CD8-positive, alpha-beta T cell (primary cell): ENCODE measurements at regions of chr16 and their contacts with region 1.

Region 1: DNA sequence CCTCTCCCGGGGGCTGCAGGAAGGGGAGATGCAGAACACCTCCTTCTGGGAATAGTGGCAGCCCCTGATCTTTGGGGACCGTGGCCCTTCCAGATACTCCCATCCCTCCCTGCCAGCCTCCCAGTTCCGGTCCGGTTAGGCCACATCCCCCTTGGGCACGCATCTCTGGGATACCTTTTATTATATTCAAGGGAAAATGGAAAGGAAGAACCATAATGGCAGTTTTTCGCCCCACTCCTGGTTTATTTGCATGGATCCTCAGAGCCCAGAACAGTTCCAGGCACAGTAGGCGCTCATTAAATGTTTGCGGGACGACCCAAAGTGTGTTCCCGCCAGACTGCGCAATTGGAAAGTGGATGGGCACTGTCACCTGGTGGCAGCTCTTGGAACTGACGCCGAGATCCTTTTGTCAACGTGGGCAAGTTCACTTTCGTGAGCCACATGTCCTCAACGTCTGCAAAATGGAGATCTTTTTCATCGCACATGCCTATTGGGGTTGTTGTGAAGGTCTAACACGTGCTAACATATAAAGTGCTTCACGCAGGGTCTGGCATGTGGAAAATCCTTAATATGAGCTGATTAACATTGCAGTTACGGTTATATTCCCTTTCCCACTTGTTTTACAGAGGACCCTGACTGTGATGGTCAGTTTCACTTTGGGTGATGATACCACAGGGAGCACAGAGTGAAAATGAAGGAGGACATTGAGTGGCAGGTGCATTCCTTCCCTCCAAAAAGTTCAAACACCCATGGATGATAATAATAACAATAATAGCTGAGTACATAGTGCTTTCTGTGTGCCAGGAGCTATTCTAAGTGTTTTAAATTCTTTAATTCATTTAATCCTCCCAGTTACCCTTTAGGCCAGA is 1.7 kb upstream of the GPRC5B start:
- DNase-seq: peak; percentile 64 to 85 (median 79)
- ATAC-seq: peak; percentile 65
- H3K4me3 ChIP-seq: peak overlapping the region in 1 of 2 experiments; percentile 72
- H3K4me3 Mint-ChIP-seq: peak overlapping the region; percentile 84
- H3K27ac ChIP-seq: no peak overlapping the region
- H3K27ac Mint-ChIP-seq: no peak overlapping the region
- H3K4me1 ChIP-seq: peaks cover 31% of the 10 kb centered on the region
- H3K4me1 Mint-ChIP-seq: peaks cover 24% of the 10 kb centered on the region
- H3K27me3 ChIP-seq: peaks cover 17 to 29% of the 10 kb centered on the region in 2 experiments
- H3K27me3 Mint-ChIP-seq: peaks cover 36% of the 10 kb centered on the region
- CTCF ChIP-seq: peak; percentile 97

Region 2: GRCh38 chr16:19086322-19087199 is 799.7 kb before region 1 on chr16:
- CTCF ChIA-PET with region 1: no interaction called
- POLR2A ChIA-PET with region 1: no interaction called
- intact Hi-C with region 1: loop called in 1 of 2 experiments (anchors 2 kb)
- DNase-seq: peak; percentile 53 to 87 (median 72)
- ATAC-seq: peak; percentile 91
- H3K4me3 ChIP-seq: peak overlapping the region; percentile 25 to 40
- H3K4me3 Mint-ChIP-seq: peak overlapping the region; percentile 63
- H3K27ac ChIP-seq: no peak overlapping the region
- H3K27ac Mint-ChIP-seq: no peak overlapping the region
- H3K4me1 ChIP-seq: peaks cover 3% of the 10 kb centered on the region
- H3K4me1 Mint-ChIP-seq: peaks cover 3% of the 10 kb centered on the region
- H3K27me3 ChIP-seq: peaks cover 0 to 4% of the 10 kb centered on the region in 2 experiments
- H3K27me3 Mint-ChIP-seq: peaks cover 2% of the 10 kb centered on the region
- CTCF ChIP-seq: peak; percentile 98

Region 3: DNA sequence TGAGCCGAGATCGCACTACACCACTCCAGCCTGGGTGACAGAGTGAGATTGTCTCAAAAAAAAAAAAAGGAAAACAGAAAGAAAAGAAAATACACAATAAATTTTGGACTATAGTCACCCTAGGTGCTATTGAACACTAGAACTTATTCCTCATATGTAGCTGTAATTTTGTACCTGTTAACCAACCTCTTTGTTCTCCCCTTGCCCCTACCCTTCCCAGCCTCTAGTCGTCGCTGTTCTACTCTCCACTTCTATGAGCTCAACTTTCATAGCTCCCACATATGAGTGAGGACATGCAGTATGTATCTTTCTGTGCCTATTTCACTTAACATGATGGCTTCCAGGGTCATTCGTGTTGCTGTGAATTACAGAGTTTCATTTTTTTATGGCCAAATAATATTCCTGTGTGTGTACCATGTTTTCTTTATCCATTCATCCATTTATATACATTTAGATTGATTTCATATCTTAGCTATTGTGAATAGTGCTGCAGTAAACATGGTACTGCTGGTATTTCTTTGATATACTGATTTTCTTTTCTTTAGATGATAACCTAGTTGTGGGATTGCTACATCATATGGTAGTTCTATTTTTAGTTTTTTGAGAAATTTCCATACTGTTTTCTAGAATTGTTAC is 302.5 kb before region 1 on chr16:
- CTCF ChIA-PET with region 1: interaction called, 18 read pairs
- POLR2A ChIA-PET with region 1: no interaction called
- intact Hi-C with region 1: loop called (anchors 1 kb)
- DNase-seq: peak in 4 of 9 experiments; percentile 8 to 61 (median 32)
- ATAC-seq: peak; percentile 75
- H3K4me3 ChIP-seq: no peak overlapping the region
- H3K4me3 Mint-ChIP-seq: no peak overlapping the region
- H3K27ac ChIP-seq: no peak overlapping the region
- H3K27ac Mint-ChIP-seq: no peak overlapping the region
- H3K4me1 ChIP-seq: no peaks in the 10 kb centered on the region
- H3K4me1 Mint-ChIP-seq: no peaks in the 10 kb centered on the region
- H3K27me3 ChIP-seq: no peaks in the 10 kb centered on the region
- H3K27me3 Mint-ChIP-seq: no peaks in the 10 kb centered on the region
- CTCF ChIP-seq: peak; percentile 63

Region 4: DNA sequence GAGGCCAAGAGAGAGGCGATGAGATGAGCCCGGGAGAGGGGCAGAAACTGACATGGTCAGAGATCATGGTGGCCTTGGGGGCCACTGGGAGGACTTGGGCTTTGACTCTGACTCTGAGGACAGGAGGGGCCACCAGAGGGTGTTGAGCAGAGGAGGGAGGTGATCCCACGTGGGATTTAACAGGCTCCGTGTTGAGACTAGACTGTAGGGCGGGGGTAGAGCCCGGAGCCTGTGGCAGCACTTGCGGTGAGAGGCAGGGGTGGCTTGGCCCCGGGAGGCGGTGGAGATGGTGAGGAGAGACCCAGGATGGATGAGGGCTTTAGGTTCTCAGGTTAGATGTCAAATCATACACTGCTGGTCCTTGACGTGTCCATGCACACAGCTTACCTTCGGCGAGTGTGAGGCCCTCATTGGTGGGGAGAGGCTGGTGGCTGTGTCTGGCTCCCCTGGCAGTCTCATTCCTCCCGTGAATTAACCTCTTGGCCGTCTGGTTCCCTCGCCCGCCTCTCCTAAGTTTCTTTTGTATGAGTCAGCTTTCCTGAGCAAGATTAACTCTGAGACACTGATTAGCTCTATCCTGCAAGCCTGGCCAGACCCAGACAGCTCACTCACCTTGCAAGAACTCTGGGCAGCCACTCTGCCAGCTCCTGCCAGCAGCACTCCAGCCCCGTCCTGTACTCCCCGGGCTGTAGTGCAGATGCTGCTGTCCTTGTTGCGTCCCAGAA is 291.1 kb before region 1 on chr16:
- CTCF ChIA-PET with region 1: interaction called, 105 read pairs
- POLR2A ChIA-PET with region 1: no interaction called
- intact Hi-C with region 1: no loop called
- DNase-seq: no peak
- ATAC-seq: no peak
- H3K4me3 ChIP-seq: no peak overlapping the region
- H3K4me3 Mint-ChIP-seq: no peak overlapping the region
- H3K27ac ChIP-seq: no peak overlapping the region
- H3K27ac Mint-ChIP-seq: no peak overlapping the region
- H3K4me1 ChIP-seq: no peaks in the 10 kb centered on the region
- H3K4me1 Mint-ChIP-seq: no peaks in the 10 kb centered on the region
- H3K27me3 ChIP-seq: no peaks in the 10 kb centered on the region
- H3K27me3 Mint-ChIP-seq: no peaks in the 10 kb centered on the region
- CTCF ChIP-seq: no peak

Region 5: DNA sequence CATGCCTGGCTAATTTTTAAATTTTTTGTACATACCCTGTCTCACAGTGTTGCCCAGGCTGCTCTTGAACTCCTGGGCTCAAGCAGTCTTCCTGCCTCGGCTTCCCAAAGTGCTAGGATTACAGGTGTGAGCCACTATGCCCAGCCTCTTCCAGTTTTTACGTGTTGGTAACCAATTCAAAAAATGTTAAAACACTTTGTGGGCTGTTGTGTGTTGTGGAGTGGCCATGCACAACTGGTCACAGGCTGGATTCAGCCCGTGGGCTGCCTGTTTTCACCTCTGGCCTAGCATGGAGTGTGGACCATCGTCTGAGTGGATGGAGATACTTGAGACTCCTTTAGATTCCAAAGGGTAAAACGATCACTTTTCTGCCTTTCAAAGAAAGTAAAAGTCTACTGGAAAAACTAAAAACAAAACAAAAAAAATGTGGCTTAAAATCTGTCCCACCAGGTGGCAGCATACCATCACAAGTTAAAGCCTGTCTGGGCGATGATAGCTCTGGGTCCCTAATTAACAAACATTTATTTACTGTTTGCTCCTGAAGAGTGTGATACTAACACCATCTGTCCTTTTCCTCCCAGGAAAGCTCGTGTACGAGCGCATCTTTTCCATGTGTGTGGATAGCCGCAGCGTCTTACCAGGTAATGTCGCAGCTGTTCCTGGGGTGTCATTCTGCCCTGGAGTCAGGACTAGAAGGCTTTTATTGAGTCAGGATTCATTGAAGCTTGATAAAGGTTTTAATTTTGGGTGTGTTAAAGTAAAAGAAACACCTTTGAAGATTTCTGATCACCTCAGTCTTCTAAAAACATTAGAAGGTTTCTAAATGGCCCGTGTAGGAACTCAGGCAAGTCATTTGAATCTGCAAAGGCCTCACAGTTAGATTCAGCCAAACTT is 285.0 kb before region 1 on chr16:
- CTCF ChIA-PET with region 1: interaction called, 105 read pairs
- POLR2A ChIA-PET with region 1: no interaction called
- intact Hi-C with region 1: loop called in 1 of 2 experiments (anchors 1 kb)
- DNase-seq: peak in 6 of 9 experiments; percentile 5 to 58 (median 30)
- ATAC-seq: no peak
- H3K4me3 ChIP-seq: no peak overlapping the region
- H3K4me3 Mint-ChIP-seq: no peak overlapping the region
- H3K27ac ChIP-seq: no peak overlapping the region
- H3K27ac Mint-ChIP-seq: no peak overlapping the region
- H3K4me1 ChIP-seq: no peaks in the 10 kb centered on the region
- H3K4me1 Mint-ChIP-seq: no peaks in the 10 kb centered on the region
- H3K27me3 ChIP-seq: no peaks in the 10 kb centered on the region
- H3K27me3 Mint-ChIP-seq: no peaks in the 10 kb centered on the region
- CTCF ChIP-seq: peak; percentile 54

Region 6: GRCh38 chr16:19717771-19718602 is 168.3 kb before region 1 on chr16 and contains the starts of genes IQCK and KNOP1:
- CTCF ChIA-PET with region 1: no interaction called
- POLR2A ChIA-PET with region 1: no interaction called
- intact Hi-C with region 1: loop called (anchors 1 to 2 kb)
- DNase-seq: peak; percentile 72 to 97 (median 86)
- ATAC-seq: peak; percentile 89
- H3K4me3 ChIP-seq: peak within 1 kb of the TSS; percentile 80 to 95
- H3K4me3 Mint-ChIP-seq: peak within 1 kb of the TSS; percentile 91
- H3K27ac ChIP-seq: peak within 1 kb of the TSS; percentile 49 to 64
- H3K27ac Mint-ChIP-seq: peak within 1 kb of the TSS; percentile 71
- H3K4me1 ChIP-seq: peaks cover 6% of the 10 kb centered on the region
- H3K4me1 Mint-ChIP-seq: peaks cover 32% of the 10 kb centered on the region
- H3K27me3 ChIP-seq: no peaks in the 10 kb centered on the region
- H3K27me3 Mint-ChIP-seq: no peaks in the 10 kb centered on the region
- CTCF ChIP-seq: no peak
- total RNA-seq, gene IQCK: 0.72 to 2.1 TPM
- total RNA-seq, gene KNOP1: 3.4 to 3.6 TPM

Region 7: GRCh38 chr16:19853742-19854542 is 32.4 kb before region 1 on chr16:
- CTCF ChIA-PET with region 1: no interaction called
- POLR2A ChIA-PET with region 1: no interaction called
- intact Hi-C with region 1: no loop called
- DNase-seq: no peak
- ATAC-seq: no peak
- H3K4me3 ChIP-seq: no peak overlapping the region
- H3K4me3 Mint-ChIP-seq: no peak overlapping the region
- H3K27ac ChIP-seq: no peak overlapping the region
- H3K27ac Mint-ChIP-seq: no peak overlapping the region
- H3K4me1 ChIP-seq: no peaks in the 10 kb centered on the region
- H3K4me1 Mint-ChIP-seq: no peaks in the 10 kb centered on the region
- H3K27me3 ChIP-seq: no peaks in the 10 kb centered on the region
- H3K27me3 Mint-ChIP-seq: peaks cover 3% of the 10 kb centered on the region
- CTCF ChIP-seq: no peak

Region 8: DNA sequence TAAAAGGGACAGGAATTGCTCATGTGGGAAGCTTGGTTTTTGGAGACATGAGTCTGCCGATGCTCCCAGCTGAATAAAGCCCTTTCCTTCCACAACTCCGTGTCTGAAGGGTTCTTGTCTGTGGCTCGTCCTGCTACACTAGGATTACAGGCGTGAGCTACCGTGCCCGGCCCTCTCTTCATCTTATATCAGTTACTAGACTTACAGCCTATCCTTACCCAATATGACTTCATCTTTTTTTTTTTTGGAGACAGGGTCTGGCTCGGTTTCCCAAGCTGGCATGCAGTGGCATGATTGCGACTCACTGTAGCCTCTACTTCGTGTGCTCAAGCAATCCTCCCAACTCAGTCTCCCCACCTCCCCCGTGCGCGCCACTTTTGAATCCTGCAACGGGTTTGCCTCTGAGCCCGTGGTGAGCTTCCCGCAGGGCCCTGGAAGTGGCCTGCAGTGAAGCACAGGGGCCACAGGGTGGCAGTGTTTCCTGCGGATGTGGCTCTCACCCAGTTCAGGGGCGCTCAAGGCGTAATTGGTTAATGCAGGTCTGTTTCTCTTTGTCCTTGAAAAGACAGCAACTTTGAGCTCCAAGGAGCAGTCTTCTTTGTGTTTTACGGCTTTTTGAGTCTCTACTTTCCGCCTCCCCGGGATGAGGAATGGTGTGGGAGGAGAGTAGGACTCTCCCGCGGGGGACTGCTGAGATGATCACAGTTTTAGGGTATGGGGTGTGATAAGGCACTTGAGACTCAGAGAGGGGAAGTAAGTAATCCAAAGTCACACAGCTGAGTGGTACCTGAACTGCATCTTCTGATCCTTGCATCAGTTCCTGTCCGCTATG is 21.1 kb after region 1 on chr16:
- CTCF ChIA-PET with region 1: interaction called, 13 read pairs
- POLR2A ChIA-PET with region 1: no interaction called
- intact Hi-C with region 1: no loop called
- DNase-seq: peak; percentile 38 to 80 (median 67)
- ATAC-seq: peak; percentile 100
- H3K4me3 ChIP-seq: peak overlapping the region in 1 of 2 experiments; percentile 11
- H3K4me3 Mint-ChIP-seq: peak overlapping the region; percentile 76
- H3K27ac ChIP-seq: no peak overlapping the region
- H3K27ac Mint-ChIP-seq: no peak overlapping the region
- H3K4me1 ChIP-seq: no peaks in the 10 kb centered on the region
- H3K4me1 Mint-ChIP-seq: peaks cover 10% of the 10 kb centered on the region
- H3K27me3 ChIP-seq: no peaks in the 10 kb centered on the region
- H3K27me3 Mint-ChIP-seq: peaks cover 17% of the 10 kb centered on the region
- CTCF ChIP-seq: peak; percentile 94